K562 (cell line): ENCODE measurements at regions of chr5 and their contacts with region 1.

Region 1: GRCh38 chr5:54517174-54518092 is at the start of gene SNX18:
- DNase-seq: peak; percentile 90 to 92 (median 91)
- ATAC-seq: peak; percentile 96
- H3K4me3 ChIP-seq: peak within 1 kb of the TSS; percentile 78
- H3K27ac ChIP-seq: peak within 1 kb of the TSS; percentile 69
- H3K4me1 ChIP-seq: peaks cover 8 to 21% of the 10 kb centered on the region in 2 experiments; a peak in 4 of 5 replicates
- H3K27me3 ChIP-seq: no peaks in the 10 kb centered on the region
- CTCF ChIP-seq: peak; percentile 92 to 98 (median 97)
- EP300 ChIP-seq: peak; percentile 46; the same call in 1 of the 2 replicates
- POLR2A ChIP-seq: no peak
- RAD21 ChIP-seq: peak; percentile 98 to 100
- polyA plus RNA-seq, gene SNX18: 2.3 to 3.4 TPM

Region 2: GRCh38 chr5:54764102-54765090 is 247.0 kb after region 1 on chr5:
- CTCF ChIA-PET with region 1: no interaction called
- POLR2A ChIA-PET with region 1: no interaction called
- in situ Hi-C with region 1: no loop called
- intact Hi-C with region 1: loop called (anchors 5 kb)
- DNase-seq: no peak
- ATAC-seq: no peak
- H3K4me3 ChIP-seq: no peak overlapping the region
- H3K27ac ChIP-seq: no peak overlapping the region
- H3K4me1 ChIP-seq: no peaks in the 10 kb centered on the region
- H3K27me3 ChIP-seq: no peaks in the 10 kb centered on the region
- CTCF ChIP-seq: no peak
- EP300 ChIP-seq: no peak
- POLR2A ChIP-seq: no peak
- RAD21 ChIP-seq: no peak

Region 3: DNA sequence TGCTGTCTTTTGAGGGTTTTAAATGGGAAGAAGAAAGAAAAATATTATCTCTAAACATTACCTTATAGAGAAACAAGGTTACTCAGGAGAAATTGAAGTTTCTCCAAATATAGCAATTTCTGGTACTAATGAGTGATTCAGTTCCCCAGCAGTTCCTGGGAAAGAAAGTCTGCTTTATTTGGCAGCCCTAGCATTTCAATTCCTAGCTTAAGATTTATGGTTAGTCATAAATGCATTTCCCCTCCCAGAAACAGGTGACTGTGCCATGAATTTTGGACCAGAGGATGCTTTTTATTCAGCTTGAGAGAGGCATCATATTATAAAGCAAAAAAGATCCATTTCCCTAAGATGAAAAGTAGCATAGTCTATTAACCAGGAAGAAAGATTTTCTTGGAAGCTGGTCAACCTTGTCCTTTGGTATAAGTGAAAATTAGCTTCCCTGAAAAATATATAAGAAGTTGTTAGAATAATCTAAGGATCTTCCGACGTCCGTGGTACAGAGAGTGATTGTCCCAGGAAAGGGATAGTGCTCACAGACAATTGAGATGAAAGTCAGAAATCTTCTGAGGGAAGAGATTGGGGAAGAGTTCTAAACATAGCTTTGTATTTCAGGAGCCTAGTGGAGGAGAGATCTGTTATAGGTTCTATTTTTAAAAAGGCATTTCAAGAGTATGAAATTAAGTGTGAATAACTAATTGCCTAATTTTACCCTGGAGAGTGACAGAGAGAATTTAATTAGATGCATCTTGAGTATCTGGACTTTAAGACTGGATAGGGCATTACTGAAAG is 303.1 kb after region 1 on chr5:
- CTCF ChIA-PET with region 1: no interaction called
- POLR2A ChIA-PET with region 1: no interaction called
- in situ Hi-C with region 1: no loop called
- intact Hi-C with region 1: no loop called
- DNase-seq: no peak
- ATAC-seq: no peak
- H3K4me3 ChIP-seq: no peak overlapping the region
- H3K27ac ChIP-seq: no peak overlapping the region
- H3K4me1 ChIP-seq: no peaks in the 10 kb centered on the region
- H3K27me3 ChIP-seq: 0 out of 5 replicates have a peak, but pooled peaks cover 0 to 2% of the 10 kb centered on the region in 2 experiments
- CTCF ChIP-seq: no peak
- EP300 ChIP-seq: no peak
- POLR2A ChIP-seq: no peak
- RAD21 ChIP-seq: no peak

Region 4: DNA sequence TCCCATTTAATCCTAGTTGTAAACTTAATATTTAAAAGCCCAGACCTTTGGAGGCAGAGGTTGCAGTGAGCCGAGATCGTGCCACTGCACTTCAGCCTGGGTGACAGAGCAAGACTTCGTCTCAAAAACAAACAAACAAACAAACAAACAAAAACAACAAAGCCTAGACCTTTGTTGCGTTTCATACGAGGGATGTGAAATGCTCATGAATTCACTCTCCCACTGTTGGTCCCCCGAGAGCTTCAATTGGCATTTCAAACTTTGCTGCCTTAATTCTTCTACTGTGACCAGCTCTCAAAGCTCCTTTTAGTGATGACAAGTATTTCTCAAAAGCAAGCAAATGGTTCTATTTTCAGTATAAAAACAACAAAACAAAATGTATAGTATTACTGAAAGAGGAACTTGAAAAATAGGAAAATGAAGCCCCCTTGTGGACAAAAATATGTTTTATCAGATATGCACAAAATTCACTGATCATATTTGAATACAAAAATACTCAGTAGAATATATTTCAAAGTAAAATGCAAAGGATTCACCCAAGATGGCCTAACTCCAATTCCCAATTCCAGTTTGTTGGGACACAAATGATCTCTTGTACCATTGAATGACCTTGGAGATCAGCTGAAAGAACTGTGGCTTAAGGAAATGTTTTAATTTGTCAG is 327.6 kb after region 1 on chr5:
- CTCF ChIA-PET with region 1: interaction called, 32 read pairs
- POLR2A ChIA-PET with region 1: interaction called, 3 read pairs
- in situ Hi-C with region 1: loop called (anchors 5 kb)
- intact Hi-C with region 1: loop called (anchors 1 kb)
- DNase-seq: peak in 2 of 4 experiments; percentile 11 to 53
- ATAC-seq: peak; percentile 61; the same call in 1 of the 3 replicates
- H3K4me3 ChIP-seq: no peak overlapping the region
- H3K27ac ChIP-seq: no peak overlapping the region
- H3K4me1 ChIP-seq: no peaks in the 10 kb centered on the region; a peak in 1 of 5 replicates
- H3K27me3 ChIP-seq: peaks cover 0 to 7% of the 10 kb centered on the region in 2 experiments; a peak in 1 of 5 replicates
- CTCF ChIP-seq: peak; percentile 32 to 74 (median 46); a peak in 4 of 6 replicates
- EP300 ChIP-seq: no peak
- POLR2A ChIP-seq: no peak
- RAD21 ChIP-seq: peak; percentile 84 to 91

Region 5: GRCh38 chr5:54867310-54867944 is 350.0 kb after region 1 on chr5:
- CTCF ChIA-PET with region 1: interaction called, 26 read pairs
- POLR2A ChIA-PET with region 1: interaction called, 9 read pairs
- in situ Hi-C with region 1: no loop called
- intact Hi-C with region 1: loop called (anchors 1 kb)
- DNase-seq: peak; percentile 43 to 53 (median 49)
- ATAC-seq: peak; percentile 48; the same call in 2 of the 3 replicates
- H3K4me3 ChIP-seq: no peak overlapping the region
- H3K27ac ChIP-seq: no peak overlapping the region
- H3K4me1 ChIP-seq: no peaks in the 10 kb centered on the region
- H3K27me3 ChIP-seq: peaks cover 4 to 11% of the 10 kb centered on the region in 2 experiments; a peak in 4 of 5 replicates
- CTCF ChIP-seq: peak; percentile 30 to 68 (median 49); a peak in 4 of 6 replicates
- EP300 ChIP-seq: no peak
- POLR2A ChIP-seq: no peak
- RAD21 ChIP-seq: peak; percentile 73 to 77